Heart left ventricle (tissue), 16 donors: ENCODE measurements at regions of chr16 and their contacts with region 1.

Region 1: DNA sequence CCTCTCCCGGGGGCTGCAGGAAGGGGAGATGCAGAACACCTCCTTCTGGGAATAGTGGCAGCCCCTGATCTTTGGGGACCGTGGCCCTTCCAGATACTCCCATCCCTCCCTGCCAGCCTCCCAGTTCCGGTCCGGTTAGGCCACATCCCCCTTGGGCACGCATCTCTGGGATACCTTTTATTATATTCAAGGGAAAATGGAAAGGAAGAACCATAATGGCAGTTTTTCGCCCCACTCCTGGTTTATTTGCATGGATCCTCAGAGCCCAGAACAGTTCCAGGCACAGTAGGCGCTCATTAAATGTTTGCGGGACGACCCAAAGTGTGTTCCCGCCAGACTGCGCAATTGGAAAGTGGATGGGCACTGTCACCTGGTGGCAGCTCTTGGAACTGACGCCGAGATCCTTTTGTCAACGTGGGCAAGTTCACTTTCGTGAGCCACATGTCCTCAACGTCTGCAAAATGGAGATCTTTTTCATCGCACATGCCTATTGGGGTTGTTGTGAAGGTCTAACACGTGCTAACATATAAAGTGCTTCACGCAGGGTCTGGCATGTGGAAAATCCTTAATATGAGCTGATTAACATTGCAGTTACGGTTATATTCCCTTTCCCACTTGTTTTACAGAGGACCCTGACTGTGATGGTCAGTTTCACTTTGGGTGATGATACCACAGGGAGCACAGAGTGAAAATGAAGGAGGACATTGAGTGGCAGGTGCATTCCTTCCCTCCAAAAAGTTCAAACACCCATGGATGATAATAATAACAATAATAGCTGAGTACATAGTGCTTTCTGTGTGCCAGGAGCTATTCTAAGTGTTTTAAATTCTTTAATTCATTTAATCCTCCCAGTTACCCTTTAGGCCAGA is 1.7 kb upstream of the GPRC5B start:
- DNase-seq: peak; percentile 69 to 81 (median 73)
- ATAC-seq: peak; percentile 28 to 52 (median 42)
- H3K4me3 ChIP-seq: peak overlapping the region in 11 of 12 donors; percentile 73 to 100 (median 93)
- H3K27ac ChIP-seq: no peak overlapping the region
- H3K4me1 ChIP-seq: peaks cover 0 to 35% (median 18%) of the 10 kb centered on the region in 12 donors
- H3K27me3 ChIP-seq: peaks cover 0 to 24% (median 0%) of the 10 kb centered on the region in 9 donors
- CTCF ChIP-seq: peak in 11 of 12 donors; percentile 99 to 100 (median 100)
- POLR2A ChIP-seq: no peak

Region 2: DNA sequence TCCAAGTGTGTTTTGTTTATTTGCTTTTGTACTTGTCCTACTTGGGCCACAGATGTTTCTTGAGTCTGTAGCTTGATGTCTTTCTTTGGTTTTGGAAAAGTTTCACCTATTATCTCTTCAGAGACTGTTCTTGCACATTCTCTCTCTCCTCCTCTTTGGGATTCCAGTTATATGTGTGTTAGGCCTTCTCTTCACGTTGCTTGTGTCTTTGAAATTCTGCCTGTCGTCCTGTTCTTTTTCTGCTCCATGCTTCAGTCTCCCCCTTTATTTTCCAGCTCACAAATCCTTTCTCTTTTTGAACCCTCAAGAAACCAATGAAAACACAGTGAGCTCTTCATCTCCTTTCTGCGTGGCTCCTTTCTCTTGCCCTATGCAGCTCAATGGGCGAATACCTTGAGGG is 322.9 kb before region 1 on chr16:
- intact Hi-C with region 1: loop called in 9 of 10 experiments (anchors 1 to 5 kb)
- DNase-seq: no peak
- ATAC-seq: no peak
- H3K4me3 ChIP-seq: no peak overlapping the region
- H3K27ac ChIP-seq: no peak overlapping the region
- H3K4me1 ChIP-seq: no peaks in the 10 kb centered on the region
- H3K27me3 ChIP-seq: no peaks in the 10 kb centered on the region
- CTCF ChIP-seq: no peak
- POLR2A ChIP-seq: no peak

Region 3: GRCh38 chr16:19601083-19601976 is 285.0 kb before region 1 on chr16:
- intact Hi-C with region 1: loop called (anchors 1 to 2 kb)
- DNase-seq: no peak
- ATAC-seq: no peak
- H3K4me3 ChIP-seq: no peak overlapping the region
- H3K27ac ChIP-seq: no peak overlapping the region
- H3K4me1 ChIP-seq: peaks cover 0 to 14% (median 5%) of the 10 kb centered on the region in 12 donors
- H3K27me3 ChIP-seq: no peaks in the 10 kb centered on the region
- CTCF ChIP-seq: peak; percentile 53 to 81 (median 69)
- POLR2A ChIP-seq: no peak

Region 4: GRCh38 chr16:19660432-19660831 is 225.9 kb before region 1 on chr16:
- intact Hi-C with region 1: loop called in 1 of 10 experiments (anchors 2 kb)
- DNase-seq: no peak
- ATAC-seq: no peak
- H3K4me3 ChIP-seq: no peak overlapping the region
- H3K27ac ChIP-seq: no peak overlapping the region
- H3K4me1 ChIP-seq: no peaks in the 10 kb centered on the region
- H3K27me3 ChIP-seq: no peaks in the 10 kb centered on the region
- CTCF ChIP-seq: no peak
- POLR2A ChIP-seq: no peak

Region 5: DNA sequence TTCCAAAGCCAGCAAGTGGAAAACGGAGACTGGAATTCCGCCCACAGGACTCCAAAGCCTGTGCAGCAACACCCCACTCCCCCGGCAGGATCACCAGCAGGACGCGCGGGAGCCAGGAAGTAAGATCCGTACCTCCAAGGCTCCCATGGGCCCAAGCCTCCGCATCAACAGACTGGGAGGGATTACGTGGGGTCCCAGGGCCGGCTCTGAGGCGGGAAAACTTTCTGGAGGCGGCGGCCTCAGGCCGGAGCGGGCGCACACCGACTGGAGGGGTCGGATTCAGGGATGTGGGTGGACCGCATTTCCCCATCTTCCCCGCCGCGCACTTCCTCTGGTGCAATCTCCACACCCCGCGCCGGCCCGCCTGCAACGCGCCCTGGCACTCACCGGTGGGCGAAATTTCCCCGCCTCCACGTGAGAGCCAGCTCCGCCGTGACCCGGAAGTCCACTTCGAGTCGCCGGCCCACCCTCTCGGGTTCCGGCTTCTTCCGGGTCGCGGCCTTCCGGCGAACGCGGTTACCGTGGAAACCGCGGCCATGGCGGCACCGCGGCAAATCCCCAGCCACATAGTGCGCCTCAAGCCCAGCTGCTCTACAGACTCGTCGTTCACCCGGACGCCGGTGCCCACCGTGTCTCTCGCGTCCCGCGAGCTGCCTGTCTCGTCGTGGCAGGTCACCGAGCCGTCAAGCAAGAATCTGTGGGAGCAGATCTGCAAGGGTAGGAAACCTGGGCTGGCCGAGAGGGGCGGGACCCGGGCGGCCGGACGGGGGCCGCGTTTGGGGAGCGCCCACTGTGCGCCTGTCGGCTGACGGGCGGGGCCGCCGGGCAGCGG is 168.3 kb before region 1 on chr16 and contains the starts of genes IQCK and KNOP1:
- intact Hi-C with region 1: loop called in 8 of 10 experiments (anchors 2 to 10 kb)
- DNase-seq: peak; percentile 92 to 94 (median 93)
- ATAC-seq: peak; percentile 93 to 98 (median 98)
- H3K4me3 ChIP-seq: peak within 1 kb of the TSS; percentile 67 to 99 (median 87)
- H3K27ac ChIP-seq: peak within 1 kb of the TSS in 11 of 12 donors; percentile 75 to 94 (median 85)
- H3K4me1 ChIP-seq: peaks cover 0 to 44% (median 35%) of the 10 kb centered on the region in 12 donors
- H3K27me3 ChIP-seq: no peaks in the 10 kb centered on the region
- CTCF ChIP-seq: peak in 2 of 12 donors; percentile 18 to 19
- POLR2A ChIP-seq: peak in 1 of 2 donors; percentile 67
- total RNA-seq, gene IQCK: 5.7 to 17.4 (median 9.0) TPM
- total RNA-seq, gene KNOP1: 6.3 to 11.5 (median 7.9) TPM

Region 6: DNA sequence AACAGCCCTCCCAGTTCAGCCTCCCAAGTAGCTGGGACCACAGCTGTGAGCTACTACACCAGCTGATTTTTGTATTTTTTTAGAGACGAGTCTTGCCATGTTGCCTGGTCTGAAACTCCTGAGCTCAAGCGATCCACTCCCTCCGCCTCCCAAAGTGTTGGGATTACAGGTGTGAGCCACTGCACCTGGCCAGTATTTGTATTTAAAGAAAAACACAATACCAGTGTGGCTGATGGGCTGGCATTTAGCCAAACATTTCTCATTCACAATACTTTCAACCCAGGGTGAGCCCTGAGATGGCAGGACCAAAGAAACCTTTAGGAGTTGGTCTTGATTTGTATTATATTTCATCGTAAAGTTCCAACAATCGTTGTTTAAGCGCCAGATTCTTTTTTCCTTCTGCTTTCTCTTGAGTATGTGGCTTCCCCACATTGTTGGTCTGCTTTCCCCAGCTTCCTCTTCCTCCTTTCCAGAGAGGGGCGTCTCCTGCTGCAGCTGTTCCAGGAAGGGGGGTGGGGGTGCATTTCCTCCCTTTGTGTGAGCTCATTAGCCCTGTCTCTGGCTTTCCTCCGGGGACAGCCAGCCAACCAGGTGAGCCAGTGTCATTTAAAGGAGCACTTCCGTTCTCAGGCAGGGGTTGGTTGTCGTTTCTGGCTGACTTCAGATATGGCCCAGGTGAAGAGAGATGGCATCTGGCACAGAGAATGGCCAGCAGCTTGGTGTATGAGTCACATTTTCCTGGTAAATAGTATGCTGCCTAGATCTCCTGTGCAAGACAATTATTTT is 81.6 kb before region 1 on chr16:
- intact Hi-C with region 1: loop called in 1 of 10 experiments (anchors 5 kb)
- DNase-seq: peak; percentile 78 to 88 (median 84)
- ATAC-seq: peak; percentile 83 to 88 (median 84)
- H3K4me3 ChIP-seq: no peak overlapping the region
- H3K27ac ChIP-seq: peak overlapping the region in 11 of 12 donors; percentile 52 to 85 (median 75)
- H3K4me1 ChIP-seq: peaks cover 0 to 56% (median 23%) of the 10 kb centered on the region in 12 donors
- H3K27me3 ChIP-seq: no peaks in the 10 kb centered on the region
- CTCF ChIP-seq: no peak
- POLR2A ChIP-seq: no peak

Region 7: DNA sequence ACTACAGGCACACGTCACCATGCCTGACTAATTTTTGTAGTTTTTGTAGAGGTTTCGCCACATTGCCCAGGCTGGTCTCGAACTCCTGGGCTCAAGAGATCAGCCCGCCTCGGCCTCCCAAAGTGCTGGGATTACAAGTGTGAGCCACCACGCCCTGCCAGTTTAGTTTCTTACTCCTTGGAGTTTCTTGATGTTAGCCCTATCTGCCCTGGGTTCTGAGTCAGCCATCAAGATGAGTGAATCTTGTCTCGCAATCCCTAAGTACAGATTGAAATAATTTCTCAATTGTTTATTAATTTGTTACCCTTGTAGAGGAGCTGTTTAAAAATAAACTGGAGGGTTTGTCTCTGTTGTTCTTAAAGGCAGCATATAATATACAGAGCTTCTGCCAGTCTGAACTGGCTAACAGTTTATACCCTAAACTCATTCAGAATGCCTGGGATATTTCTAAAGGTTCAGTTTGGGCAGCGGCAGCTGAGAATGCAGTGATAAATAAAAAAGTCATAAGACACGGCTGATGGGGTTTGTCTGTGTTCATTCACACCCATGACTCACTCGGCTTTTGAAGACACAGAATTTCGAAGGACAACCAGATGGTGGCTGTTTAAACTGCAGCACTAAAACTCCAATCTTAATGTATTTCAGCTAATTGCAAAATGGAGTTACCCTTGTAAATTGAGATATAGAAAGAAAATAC is 41.2 kb before region 1 on chr16:
- intact Hi-C with region 1: loop called in 1 of 10 experiments (anchors 5 kb)
- DNase-seq: no peak
- ATAC-seq: peak in 1 of 4 donors; percentile 16
- H3K4me3 ChIP-seq: no peak overlapping the region
- H3K27ac ChIP-seq: peak overlapping the region in 10 of 12 donors; percentile 5 to 70 (median 48)
- H3K4me1 ChIP-seq: peaks cover 0 to 25% (median 8%) of the 10 kb centered on the region in 12 donors
- H3K27me3 ChIP-seq: no peaks in the 10 kb centered on the region
- CTCF ChIP-seq: no peak
- POLR2A ChIP-seq: no peak

Region 8: DNA sequence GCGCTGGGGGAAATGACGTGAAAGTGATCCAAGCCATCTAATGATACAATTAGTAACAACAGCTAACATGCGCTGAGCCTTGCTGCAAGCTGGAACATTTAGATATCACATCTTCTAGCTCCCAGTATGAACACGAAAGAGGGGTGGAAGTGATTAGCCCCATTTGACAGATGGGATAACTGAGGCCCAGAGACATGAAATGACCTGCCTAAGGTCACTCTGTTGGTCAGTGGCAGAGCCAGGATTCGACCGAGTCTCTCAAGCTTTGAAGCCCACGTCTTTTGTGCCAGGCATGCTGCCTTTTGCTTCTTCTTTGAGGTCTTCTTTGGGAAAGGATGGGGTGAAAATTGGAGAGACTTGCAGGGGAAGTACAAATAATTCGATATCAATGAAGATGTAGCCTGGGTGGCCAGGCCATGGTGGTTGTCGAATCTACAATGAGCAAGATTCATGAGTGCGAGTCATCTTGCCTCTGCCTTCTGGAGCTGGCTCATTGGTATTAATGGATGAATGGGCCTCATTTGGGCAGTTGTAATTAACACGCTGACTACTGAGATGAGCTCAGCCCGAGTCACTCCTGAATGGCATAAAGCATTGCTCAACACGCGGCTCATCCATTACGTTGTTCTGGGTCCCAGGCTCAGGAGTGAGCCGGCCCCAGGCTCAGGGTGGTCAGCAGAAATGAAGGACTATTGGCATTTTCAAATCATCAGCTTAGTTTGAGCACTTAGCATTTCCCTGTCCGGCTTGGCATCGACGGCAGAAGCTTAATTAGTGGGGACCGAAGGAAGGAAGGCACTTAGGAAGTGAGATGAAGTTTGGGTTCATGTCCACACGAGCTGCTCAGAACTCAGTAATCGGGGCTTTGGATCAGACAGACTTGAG is 26.4 kb after region 1 on chr16:
- intact Hi-C with region 1: no loop called
- DNase-seq: no peak
- ATAC-seq: no peak
- H3K4me3 ChIP-seq: no peak overlapping the region
- H3K27ac ChIP-seq: no peak overlapping the region
- H3K4me1 ChIP-seq: peaks cover 0 to 2% (median 0%) of the 10 kb centered on the region in 12 donors
- H3K27me3 ChIP-seq: peaks cover 0 to 17% (median 5%) of the 10 kb centered on the region in 9 donors
- CTCF ChIP-seq: no peak
- POLR2A ChIP-seq: no peak

Region 9: DNA sequence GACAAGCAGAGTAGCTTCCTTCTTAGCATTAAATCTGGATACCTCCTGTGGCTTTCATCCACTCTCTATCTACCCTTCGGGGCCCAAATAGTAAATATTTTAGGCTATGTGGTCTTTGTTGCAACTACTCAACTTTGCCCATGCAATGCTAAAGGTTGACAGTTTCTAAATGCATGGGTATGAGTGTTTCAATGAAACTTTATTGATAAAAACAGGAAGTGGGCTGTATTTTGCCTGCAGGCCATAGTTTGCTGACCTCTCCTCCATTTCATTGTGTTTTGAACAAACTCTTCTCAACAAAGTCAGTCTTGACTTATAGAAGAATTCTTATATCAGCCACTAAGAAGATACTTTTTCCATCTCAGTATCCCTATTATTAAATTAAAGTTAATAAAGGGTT is 599.1 kb after region 1 on chr16:
- intact Hi-C with region 1: no loop called
- DNase-seq: no peak
- ATAC-seq: no peak
- H3K4me3 ChIP-seq: no peak overlapping the region
- H3K27ac ChIP-seq: no peak overlapping the region
- H3K4me1 ChIP-seq: no peaks in the 10 kb centered on the region
- H3K27me3 ChIP-seq: no peaks in the 10 kb centered on the region
- CTCF ChIP-seq: no peak
- POLR2A ChIP-seq: no peak